Activated CD4-positive, alpha-beta T cell treated with anti-CD3 and anti-CD28 coated beads for 36 hours (primary cell): ENCODE measurements at regions of chr6 and their contacts with region 1.

Region 1: GRCh38 chr6:24883618-24884017 is 52.1 kb downstream of the RIPOR2 start:
- DNase-seq: peak; percentile 69
- ATAC-seq: peak; percentile 85
- H3K4me3 Mint-ChIP-seq: peak overlapping the region; percentile 72
- H3K27ac Mint-ChIP-seq: peak overlapping the region; percentile 100
- H3K4me1 Mint-ChIP-seq: peaks cover 88% of the 10 kb centered on the region
- H3K27me3 Mint-ChIP-seq: no peaks in the 10 kb centered on the region

Region 2: GRCh38 chr6:24524805-24525204 is 358.8 kb before region 1 on chr6:
- CTCF ChIA-PET with region 1: no interaction called
- POLR2A ChIA-PET with region 1: no interaction called
- intact Hi-C with region 1: no loop called
- DNase-seq: peak; percentile 40
- ATAC-seq: peak; percentile 37
- H3K4me3 Mint-ChIP-seq: no peak overlapping the region
- H3K27ac Mint-ChIP-seq: no peak overlapping the region
- H3K4me1 Mint-ChIP-seq: peaks cover 10% of the 10 kb centered on the region
- H3K27me3 Mint-ChIP-seq: no peaks in the 10 kb centered on the region

Region 3: DNA sequence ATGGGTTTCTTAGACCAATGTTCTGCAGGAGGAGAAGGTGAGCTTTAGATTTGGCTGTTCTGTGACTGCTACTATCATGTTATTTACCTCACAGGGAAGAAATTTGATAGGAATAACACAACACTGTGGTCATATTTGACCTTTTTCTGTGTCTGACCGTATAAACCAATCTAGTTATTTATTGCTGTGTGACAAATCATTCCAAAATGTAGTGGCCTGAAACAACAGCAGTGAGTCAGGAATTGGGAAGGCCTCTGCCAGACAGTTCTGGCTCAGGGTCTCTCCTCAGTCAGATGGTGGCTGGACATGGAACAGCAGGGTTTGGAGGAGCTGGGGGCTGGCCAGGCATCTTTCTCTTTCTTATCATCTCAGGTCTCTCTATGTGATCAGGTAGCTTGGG is 19.2 kb after region 1 on chr6:
- CTCF ChIA-PET with region 1: interaction called, 43 read pairs
- POLR2A ChIA-PET with region 1: interaction called, 11 read pairs
- intact Hi-C with region 1: loop called (anchors 1 to 2 kb)
- DNase-seq: no peak
- ATAC-seq: no peak
- H3K4me3 Mint-ChIP-seq: no peak overlapping the region
- H3K27ac Mint-ChIP-seq: peak overlapping the region; percentile 78
- H3K4me1 Mint-ChIP-seq: peaks cover 92% of the 10 kb centered on the region
- H3K27me3 Mint-ChIP-seq: no peaks in the 10 kb centered on the region

Region 4: DNA sequence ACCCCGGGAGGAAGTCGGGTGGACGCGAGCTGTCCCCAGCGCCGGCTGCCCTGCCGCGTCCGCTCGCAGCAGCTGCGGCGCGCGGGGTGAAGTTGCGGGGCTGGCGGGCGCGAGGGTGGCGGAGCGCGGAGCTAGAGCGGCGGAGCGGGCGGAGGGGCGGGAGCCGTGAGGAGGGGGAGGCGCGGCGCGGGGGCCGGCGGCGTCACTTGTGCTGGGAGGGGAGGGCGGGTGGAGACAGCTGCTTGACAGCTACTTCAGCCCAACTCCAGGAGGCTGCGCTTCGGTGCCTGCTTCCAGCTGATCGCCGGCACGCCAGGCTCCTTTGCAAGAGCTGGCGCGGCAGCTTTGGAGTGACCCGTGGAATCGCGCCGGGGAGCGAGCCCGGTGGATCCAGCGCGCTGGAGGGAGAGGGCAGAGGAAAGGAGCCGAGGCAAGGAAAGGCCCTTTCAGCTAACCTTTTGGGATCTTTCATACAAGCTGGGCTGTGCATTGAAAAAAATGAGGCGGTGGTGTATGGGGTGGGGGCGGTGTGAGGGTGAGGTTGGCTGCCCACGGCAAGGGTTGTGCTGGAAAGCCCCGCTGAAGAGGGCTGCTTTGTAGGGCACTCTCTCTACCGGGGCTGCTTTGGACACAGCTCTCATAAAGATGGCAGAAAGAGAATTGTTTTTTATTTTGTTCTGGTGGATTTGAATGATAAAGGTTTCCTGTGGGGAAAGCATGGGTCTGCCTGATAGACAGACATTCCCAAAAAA is 27.5 kb after region 1 on chr6:
- CTCF ChIA-PET with region 1: interaction called, 22 read pairs
- POLR2A ChIA-PET with region 1: interaction called, 7 read pairs
- intact Hi-C with region 1: loop called in 1 of 2 experiments (anchors 2 kb)
- DNase-seq: peak; percentile 80
- ATAC-seq: peak; percentile 8
- H3K4me3 Mint-ChIP-seq: peak overlapping the region; percentile 85
- H3K27ac Mint-ChIP-seq: peak overlapping the region; percentile 90
- H3K4me1 Mint-ChIP-seq: peaks cover 83% of the 10 kb centered on the region
- H3K27me3 Mint-ChIP-seq: no peaks in the 10 kb centered on the region

Region 5: GRCh38 chr6:24927985-24928745 is 44.5 kb after region 1 on chr6:
- CTCF ChIA-PET with region 1: interaction called, 23 read pairs
- POLR2A ChIA-PET with region 1: interaction called, 3 read pairs
- intact Hi-C with region 1: loop called (anchors 1 to 2 kb)
- DNase-seq: no peak
- ATAC-seq: peak; percentile 15
- H3K4me3 Mint-ChIP-seq: peak overlapping the region; percentile 84
- H3K27ac Mint-ChIP-seq: peak overlapping the region; percentile 95
- H3K4me1 Mint-ChIP-seq: peaks cover 90% of the 10 kb centered on the region
- H3K27me3 Mint-ChIP-seq: no peaks in the 10 kb centered on the region

Region 6: DNA sequence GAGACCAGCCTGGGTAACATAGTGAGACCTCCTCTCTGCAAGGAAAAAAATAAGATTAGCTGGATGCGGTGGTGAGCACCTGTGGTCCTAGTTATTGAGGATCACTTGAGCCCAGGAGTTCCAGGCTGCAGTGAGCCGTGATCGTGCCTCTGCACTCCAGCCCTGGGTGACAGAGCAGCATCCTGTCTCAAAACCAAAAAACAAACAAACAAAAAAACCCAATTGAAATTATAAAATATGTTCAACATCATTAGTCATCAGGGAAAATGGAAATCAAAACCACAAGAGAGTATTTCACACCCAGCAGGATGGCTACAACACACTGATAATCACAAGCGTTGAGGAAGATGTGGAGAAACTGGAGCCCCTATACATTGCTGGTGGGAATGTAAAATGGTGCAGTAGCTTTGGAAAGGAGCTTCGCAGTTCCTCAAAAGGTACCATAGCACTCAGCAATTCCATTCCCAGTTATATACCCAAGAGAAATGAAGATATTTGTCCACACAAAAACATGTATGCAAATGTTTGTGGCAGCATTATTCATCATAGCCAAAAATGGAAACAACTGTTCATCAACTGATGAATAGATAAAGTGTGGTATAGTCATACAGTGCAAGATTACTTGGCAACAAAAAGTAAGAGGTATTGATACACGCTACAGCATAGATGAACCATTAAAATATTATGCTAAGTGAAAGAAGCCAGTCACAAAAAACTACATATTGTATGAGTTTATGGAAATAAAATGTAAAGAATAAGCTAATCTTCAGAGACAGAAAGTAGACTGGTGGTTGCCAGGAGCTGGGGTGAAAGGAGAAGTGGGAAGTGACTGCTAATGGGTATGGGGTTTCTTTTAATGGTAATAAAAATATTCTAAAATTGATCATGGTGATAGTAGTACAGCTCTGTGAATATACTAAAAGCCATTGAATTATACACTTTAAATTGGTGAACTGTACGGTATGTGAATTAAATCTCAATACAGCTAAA is 90.9 kb after region 1 on chr6:
- CTCF ChIA-PET with region 1: interaction called, 5 read pairs
- POLR2A ChIA-PET with region 1: no interaction called
- intact Hi-C with region 1: loop called (anchors 1 kb)
- DNase-seq: peak; percentile 60
- ATAC-seq: peak; percentile 92
- H3K4me3 Mint-ChIP-seq: peak overlapping the region; percentile 33
- H3K27ac Mint-ChIP-seq: peak overlapping the region; percentile 86
- H3K4me1 Mint-ChIP-seq: peaks cover 59% of the 10 kb centered on the region
- H3K27me3 Mint-ChIP-seq: no peaks in the 10 kb centered on the region

Region 7: GRCh38 chr6:25042036-25042521 is 158.5 kb after region 1 on chr6:
- CTCF ChIA-PET with region 1: interaction called, 3 read pairs
- POLR2A ChIA-PET with region 1: no interaction called
- intact Hi-C with region 1: loop called in 1 of 2 experiments (anchors 1 kb)
- DNase-seq: peak; percentile 70
- ATAC-seq: peak; percentile 60
- H3K4me3 Mint-ChIP-seq: peak overlapping the region; percentile 91
- H3K27ac Mint-ChIP-seq: peak overlapping the region; percentile 98
- H3K4me1 Mint-ChIP-seq: peaks cover 69% of the 10 kb centered on the region
- H3K27me3 Mint-ChIP-seq: no peaks in the 10 kb centered on the region